ENCODE measurements at regions of chr4 and their contacts with region 1.

Region 1: DNA sequence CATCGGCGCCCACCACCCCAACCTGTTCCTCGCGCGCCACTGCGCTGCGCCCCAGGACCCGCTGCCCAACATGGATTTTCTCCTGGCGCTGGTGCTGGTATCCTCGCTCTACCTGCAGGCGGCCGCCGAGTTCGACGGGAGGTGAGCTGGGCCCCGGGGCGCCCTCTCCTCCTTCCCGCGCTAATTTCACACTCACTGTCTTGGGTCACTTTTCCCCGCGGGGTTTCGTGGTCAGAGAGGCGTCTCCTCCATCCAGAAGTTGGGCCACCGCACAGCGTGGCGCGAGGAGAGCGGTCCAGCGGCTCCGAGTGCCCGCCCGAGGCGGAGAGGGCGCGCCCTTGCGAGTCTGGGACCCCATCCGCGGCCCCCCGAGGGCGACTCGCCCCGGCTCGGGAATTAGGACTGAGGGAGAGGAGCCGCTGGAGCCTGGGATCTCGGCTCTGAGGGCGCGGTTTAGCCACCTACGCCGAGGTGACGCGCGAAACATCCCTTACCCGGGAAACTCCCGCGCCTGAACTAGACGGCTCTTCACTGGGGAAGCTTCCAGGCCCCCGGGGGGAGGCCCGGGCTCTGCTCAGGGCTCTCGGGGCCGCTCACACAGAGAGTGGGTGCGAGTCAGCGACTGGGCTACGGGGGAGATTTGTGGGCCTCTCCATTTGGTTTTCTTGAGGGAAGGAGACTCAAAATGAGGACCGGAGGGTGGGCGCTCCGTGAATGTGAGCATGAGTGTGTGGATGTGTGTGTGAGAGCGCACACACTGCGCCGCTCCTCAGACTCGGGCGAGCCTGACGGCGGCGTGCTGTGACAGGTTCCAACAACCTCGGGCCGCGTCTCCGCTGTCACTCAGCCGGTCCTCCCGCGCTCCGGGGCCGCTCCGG is 551 bp downstream of the NPNT start:
- DNase-seq: peak; percentile 67
- H3K4me3 ChIP-seq: peak overlapping the region; percentile 51 to 67
- H3K27ac ChIP-seq: peak overlapping the region; percentile 80 to 89
- H3K4me1 ChIP-seq: no peaks in the 10 kb centered on the region
- H3K27me3 ChIP-seq: no peaks in the 10 kb centered on the region
- CTCF ChIP-seq: peak in 2 of 4 experiments; percentile 30 to 34
- POLR2A ChIP-seq: peak; percentile 10

Region 2: DNA sequence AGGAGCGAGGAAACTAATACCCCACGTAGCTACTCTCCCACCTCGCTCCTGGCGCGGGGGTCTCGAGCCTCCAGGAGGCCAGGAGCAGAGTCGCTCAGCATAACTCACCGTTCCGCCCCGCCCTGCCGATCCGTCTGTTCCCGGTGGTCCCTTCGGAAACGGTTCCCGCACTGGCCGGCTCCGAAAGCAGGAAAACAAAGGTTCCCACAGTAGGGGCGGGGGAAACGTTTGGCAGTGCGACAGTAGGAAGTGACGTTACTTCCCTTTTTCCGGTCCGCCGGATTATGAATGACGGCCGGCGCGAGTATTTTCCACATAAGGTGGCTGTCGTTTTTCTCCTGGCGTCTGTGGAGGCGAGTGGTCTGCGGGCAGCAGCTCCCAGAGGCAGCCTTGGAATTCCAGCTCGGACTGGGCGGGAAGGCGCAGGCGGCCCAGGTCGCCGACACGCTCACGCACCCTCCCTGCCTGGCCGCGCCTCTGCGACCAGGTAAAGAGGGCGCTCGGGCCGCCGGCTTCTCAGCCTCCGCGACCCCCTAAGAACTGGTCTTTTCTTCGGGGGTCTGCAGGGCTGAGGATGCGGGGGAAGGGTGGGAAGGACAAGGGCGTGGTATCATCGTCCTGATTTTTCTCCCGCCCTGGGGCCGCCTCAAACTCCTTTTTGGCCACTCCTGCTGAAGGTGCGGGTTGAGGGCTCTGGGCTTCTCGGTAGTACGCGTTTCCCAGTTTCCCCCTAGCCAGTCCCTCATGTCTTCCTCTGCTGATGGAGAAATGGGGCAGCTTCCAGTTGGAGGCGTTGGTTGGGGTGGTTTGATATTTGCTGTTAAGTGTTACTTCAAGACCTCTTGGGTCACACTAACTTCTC is 187.1 kb before region 1 on chr4 and contains the starts of genes GSTCD and INTS12:
- intact Hi-C with region 1: loop called (anchors 5 kb)
- DNase-seq: peak; percentile 92
- H3K4me3 ChIP-seq: peak within 1 kb of the TSS; percentile 82 to 85
- H3K27ac ChIP-seq: peak within 1 kb of the TSS; percentile 89 to 92
- H3K4me1 ChIP-seq: no peaks in the 10 kb centered on the region
- H3K27me3 ChIP-seq: no peaks in the 10 kb centered on the region
- CTCF ChIP-seq: peak in 1 of 4 experiments; percentile 24
- POLR2A ChIP-seq: peak; percentile 56
- total RNA-seq, gene GSTCD: 10.0 to 20.8 TPM
- total RNA-seq, gene INTS12: 27.4 to 45.6 TPM

Region 3: DNA sequence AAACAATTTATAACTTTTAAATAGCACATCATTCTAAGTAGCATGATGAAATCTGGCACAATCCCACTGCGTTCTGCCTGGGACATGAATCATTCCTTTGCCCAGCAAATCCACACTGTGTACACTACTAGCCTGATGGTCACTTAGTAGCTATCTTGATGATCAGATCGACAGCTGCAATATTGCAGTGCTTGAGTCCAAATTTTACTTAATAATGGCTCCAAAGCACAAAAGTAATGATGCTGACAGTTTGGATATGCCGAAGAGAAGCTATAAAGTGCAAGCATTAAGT is 87.1 kb before region 1 on chr4:
- intact Hi-C with region 1: loop called (anchors 10 kb)
- DNase-seq: peak; percentile 4
- H3K4me3 ChIP-seq: peak overlapping the region in 1 of 2 donors; percentile 8
- H3K27ac ChIP-seq: no peak overlapping the region
- H3K4me1 ChIP-seq: no peaks in the 10 kb centered on the region
- H3K27me3 ChIP-seq: no peaks in the 10 kb centered on the region
- CTCF ChIP-seq: no peak
- POLR2A ChIP-seq: no peak

Region 4: DNA sequence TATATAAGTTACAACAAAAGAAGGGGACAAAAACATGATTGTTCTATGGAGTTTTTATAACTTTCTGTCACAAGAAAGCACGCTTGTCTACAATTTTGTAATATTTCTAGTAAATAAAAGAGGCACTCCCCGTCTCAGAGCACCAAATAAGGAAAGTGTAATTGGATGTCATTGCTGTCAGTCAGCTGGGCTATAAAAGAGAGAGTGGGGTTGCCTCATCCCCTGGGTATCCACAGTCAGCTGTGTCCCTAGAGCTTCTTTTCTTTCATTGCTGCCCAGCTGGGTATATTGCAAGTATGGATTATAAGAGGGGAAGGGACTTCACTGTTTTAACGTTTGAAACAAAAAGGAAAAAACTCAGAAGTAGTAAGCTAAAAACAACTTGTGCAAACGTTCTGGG is 60.7 kb after region 1 on chr4:
- intact Hi-C with region 1: loop called (anchors 5 kb)
- DNase-seq: no peak
- H3K4me3 ChIP-seq: no peak overlapping the region
- H3K27ac ChIP-seq: peak overlapping the region in 1 of 2 donors; percentile 31
- H3K4me1 ChIP-seq: no peaks in the 10 kb centered on the region
- H3K27me3 ChIP-seq: no peaks in the 10 kb centered on the region
- CTCF ChIP-seq: no peak
- POLR2A ChIP-seq: no peak

Region 5: DNA sequence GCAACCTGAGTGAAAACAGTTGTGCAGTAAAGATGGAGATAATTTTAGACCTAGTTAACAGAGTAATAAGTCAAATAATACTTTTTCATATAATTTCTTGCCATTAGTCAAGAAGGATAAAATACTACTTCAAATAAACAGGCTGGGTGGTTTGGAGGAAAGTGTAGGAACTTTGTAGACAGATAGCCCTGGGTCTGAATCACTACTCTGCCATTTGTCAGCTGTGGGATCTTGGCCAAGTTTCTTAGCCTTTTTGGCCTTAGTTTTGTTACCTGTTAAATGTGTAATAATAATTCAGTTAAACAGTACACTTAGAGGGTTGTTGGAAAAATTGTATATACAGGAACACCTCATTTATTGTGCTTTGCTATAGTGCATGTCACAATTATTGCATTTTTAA is 163.1 kb after region 1 on chr4:
- intact Hi-C with region 1: loop called (anchors 5 kb)
- DNase-seq: no peak
- H3K4me3 ChIP-seq: no peak overlapping the region
- H3K27ac ChIP-seq: no peak overlapping the region
- H3K4me1 ChIP-seq: no peaks in the 10 kb centered on the region
- H3K27me3 ChIP-seq: no peaks in the 10 kb centered on the region
- CTCF ChIP-seq: no peak
- POLR2A ChIP-seq: no peak

Region 6: GRCh38 chr4:106160560-106160959 is 264.7 kb after region 1 on chr4:
- intact Hi-C with region 1: loop called (anchors 10 kb)
- DNase-seq: no peak
- H3K4me3 ChIP-seq: no peak overlapping the region
- H3K27ac ChIP-seq: no peak overlapping the region
- H3K4me1 ChIP-seq: no peaks in the 10 kb centered on the region
- H3K27me3 ChIP-seq: no peaks in the 10 kb centered on the region
- CTCF ChIP-seq: no peak
- POLR2A ChIP-seq: no peak

Region 7: DNA sequence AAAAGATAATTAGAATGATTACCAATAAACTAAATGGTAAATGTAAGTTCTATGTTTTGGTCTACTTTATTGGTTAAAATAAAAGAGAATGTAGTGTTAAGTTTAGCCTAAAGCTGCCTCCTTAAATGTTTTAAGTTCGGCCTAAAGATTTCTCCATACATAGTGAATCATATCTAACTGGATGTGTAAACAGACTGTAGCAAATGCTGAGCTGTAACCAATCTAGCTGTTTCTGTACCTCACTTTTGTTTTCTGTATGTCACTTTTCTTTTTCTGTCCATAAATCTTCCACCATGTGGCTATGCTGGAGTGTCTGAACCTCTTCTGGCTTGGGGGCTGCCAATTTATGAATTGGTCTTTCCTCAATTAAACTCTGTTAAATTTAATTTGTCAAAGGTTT is 299.0 kb after region 1 on chr4:
- intact Hi-C with region 1: loop called (anchors 10 kb)
- DNase-seq: no peak
- H3K4me3 ChIP-seq: no peak overlapping the region
- H3K27ac ChIP-seq: no peak overlapping the region
- H3K4me1 ChIP-seq: no peaks in the 10 kb centered on the region
- H3K27me3 ChIP-seq: no peaks in the 10 kb centered on the region
- CTCF ChIP-seq: no peak
- POLR2A ChIP-seq: no peak

Measured in prostate gland (tissue), 2 donors.